H1 (cell line): ENCODE measurements at regions of chr19 and their contacts with region 1.

Region 1: DNA sequence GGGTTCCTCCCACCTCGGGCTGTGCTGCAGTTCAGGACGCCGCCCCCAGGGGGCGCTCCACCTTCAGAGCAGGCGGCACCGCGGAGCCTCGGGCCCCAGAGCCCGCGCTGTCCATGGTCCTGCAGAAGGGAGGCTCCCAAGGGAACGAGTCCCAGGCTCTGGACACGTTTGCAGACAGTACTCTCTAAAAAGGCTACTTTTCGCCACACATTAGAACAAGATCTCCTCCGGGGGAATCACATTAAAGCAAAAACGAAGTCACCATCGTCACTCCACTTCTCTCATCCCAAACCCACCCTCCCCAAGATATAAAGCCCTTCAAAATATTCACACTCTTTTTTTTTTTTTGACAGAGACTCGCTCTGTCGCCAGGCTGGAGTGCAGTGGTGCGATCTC is 4.6 kb upstream of the SIGLEC10 start:
- DNase-seq: peak; percentile 69 to 100
- H3K4me3 ChIP-seq: peak overlapping the region in 3 of 4 experiments; percentile 46 to 58 (median 49); a peak in 6 of 8 replicates
- H3K27ac ChIP-seq: no peak overlapping the region
- H3K4me1 ChIP-seq: peaks cover 0 to 11% (median 3%) of the 10 kb centered on the region in 4 experiments; a peak in 2 of 7 replicates
- H3K27me3 ChIP-seq: peaks cover 0 to 5% (median 2%) of the 10 kb centered on the region in 4 experiments; a peak in 3 of 7 replicates
- CTCF ChIP-seq: peak; percentile 92 to 97 (median 95)
- EP300 ChIP-seq: 0 out of 3 replicates have a peak, but pooled peaks of 1 of the 2 experiments have one; percentile 23
- POLR2A ChIP-seq: no peak
- RAD21 ChIP-seq: peak; percentile 65 to 77

Region 2: GRCh38 chr19:51407511-51408131 is 14.4 kb before region 1 on chr19:
- CTCF ChIA-PET with region 1: interaction called, 58 read pairs
- POLR2A ChIA-PET with region 1: interaction called, 9 read pairs
- DNase-seq: no peak
- H3K4me3 ChIP-seq: no peak overlapping the region
- H3K27ac ChIP-seq: no peak overlapping the region
- H3K4me1 ChIP-seq: peaks cover 0 to 13% (median 4%) of the 10 kb centered on the region in 4 experiments; a peak in 6 of 7 replicates
- H3K27me3 ChIP-seq: no peaks in the 10 kb centered on the region
- CTCF ChIP-seq: peak; percentile 7 to 77 (median 64)
- EP300 ChIP-seq: no peak
- POLR2A ChIP-seq: no peak
- RAD21 ChIP-seq: peak; percentile 54 to 69

Region 3: GRCh38 chr19:51480590-51480989 is 58.5 kb after region 1 on chr19:
- CTCF ChIA-PET with region 1: no interaction called
- POLR2A ChIA-PET with region 1: no interaction called
- DNase-seq: no peak
- H3K4me3 ChIP-seq: no peak overlapping the region
- H3K27ac ChIP-seq: no peak overlapping the region
- H3K4me1 ChIP-seq: no peaks in the 10 kb centered on the region
- H3K27me3 ChIP-seq: no peaks in the 10 kb centered on the region
- CTCF ChIP-seq: no peak
- EP300 ChIP-seq: no peak
- POLR2A ChIP-seq: no peak
- RAD21 ChIP-seq: no peak